GM12878 (cell line): ENCODE measurements at regions of chr2 and their contacts with region 1.

Region 1: GRCh38 chr2:171824086-171824485 is 70.0 kb downstream of the SLC25A12 start:
- DNase-seq: no peak
- ATAC-seq: no peak
- H3K4me3 ChIP-seq: no peak overlapping the region
- H3K27ac ChIP-seq: no peak overlapping the region
- H3K4me1 ChIP-seq: no peaks in the 10 kb centered on the region
- H3K27me3 ChIP-seq: no peaks in the 10 kb centered on the region
- CTCF ChIP-seq: no peak
- EP300 ChIP-seq: no peak
- POLR2A ChIP-seq: no peak
- RAD21 ChIP-seq: no peak

Region 2: GRCh38 chr2:171811245-171811628 is 12.8 kb before region 1 on chr2:
- CTCF ChIA-PET with region 1: interaction called, 3 read pairs
- POLR2A ChIA-PET with region 1: no interaction called
- RAD21 ChIA-PET with region 1: interaction called, 3 read pairs
- SMC1A ChIA-PET with region 1: interaction called, 12 read pairs
- in situ Hi-C with region 1: no loop called
- intact Hi-C with region 1: no loop called
- DNase-seq: no peak
- ATAC-seq: 0 out of 3 replicates have a peak, but pooled peaks have one; percentile 25
- H3K4me3 ChIP-seq: no peak overlapping the region
- H3K27ac ChIP-seq: no peak overlapping the region
- H3K4me1 ChIP-seq: no peaks in the 10 kb centered on the region
- H3K27me3 ChIP-seq: no peaks in the 10 kb centered on the region
- CTCF ChIP-seq: peak in 2 of 3 experiments; percentile 35 to 48; a peak in 3 of 6 replicates
- EP300 ChIP-seq: no peak
- POLR2A ChIP-seq: no peak
- RAD21 ChIP-seq: peak; percentile 67